SK-N-SH (cell line): ENCODE measurements at regions of chr19 and their contacts with region 1.

Region 1: DNA sequence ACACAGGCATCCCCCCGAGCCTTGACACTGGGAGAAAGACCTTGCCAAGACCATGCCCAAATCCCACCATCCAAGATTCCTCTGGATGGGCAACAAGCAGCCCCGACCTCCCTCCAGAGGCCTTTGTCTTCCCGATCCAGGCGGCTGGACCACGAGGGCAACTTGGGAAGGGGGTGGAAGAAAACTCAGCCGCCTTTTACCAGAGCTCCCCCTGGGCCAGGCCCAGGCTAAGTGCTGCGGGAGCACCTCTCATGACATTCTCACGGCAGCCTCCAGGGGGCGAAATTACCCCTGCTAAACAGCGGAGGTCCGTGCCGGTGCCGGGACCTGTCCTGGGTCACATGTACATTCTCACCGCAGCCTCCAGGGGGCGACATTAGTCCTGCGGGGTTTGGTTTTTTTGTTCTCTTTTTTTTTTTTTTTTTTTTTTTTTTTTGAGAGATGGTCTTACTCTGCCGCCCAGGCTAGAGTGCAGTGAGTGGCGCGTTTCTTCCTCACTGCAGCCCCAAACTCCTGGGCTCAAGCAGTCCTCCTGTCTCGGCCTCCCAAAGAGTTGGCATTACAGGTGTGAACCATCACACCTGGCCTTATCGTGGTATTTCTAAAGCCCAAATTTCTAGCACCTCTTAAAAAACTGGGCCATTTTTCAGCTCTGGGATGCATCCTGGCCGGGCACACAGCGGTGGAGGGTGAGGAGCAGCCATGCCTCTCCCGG is 2.1 kb upstream of the RSPH6A start:
- DNase-seq: peak; percentile 99
- H3K4me3 ChIP-seq: peak overlapping the region in 1 of 2 experiments; percentile 58; a peak in 1 of 4 replicates
- H3K27ac ChIP-seq: no peak overlapping the region; a peak in 1 of 4 replicates
- H3K4me1 ChIP-seq: peaks cover 0 to 9% of the 10 kb centered on the region in 2 experiments; a peak in 1 of 4 replicates
- H3K27me3 ChIP-seq: no peaks in the 10 kb centered on the region
- CTCF ChIP-seq: peak; percentile 99
- EP300 ChIP-seq: no peak
- RAD21 ChIP-seq: peak; percentile 82

Region 2: GRCh38 chr19:45770192-45771101 is 46.7 kb before region 1 on chr19:
- CTCF ChIA-PET with region 1: interaction called, 19 read pairs
- POLR2A ChIA-PET with region 1: interaction called, 4 read pairs
- DNase-seq: peak; percentile 96
- H3K4me3 ChIP-seq: peak overlapping the region; percentile 55 to 61
- H3K27ac ChIP-seq: peak overlapping the region; percentile 79 to 95
- H3K4me1 ChIP-seq: peaks cover 8 to 30% of the 10 kb centered on the region in 2 experiments; a peak in 3 of 4 replicates
- H3K27me3 ChIP-seq: no peaks in the 10 kb centered on the region
- CTCF ChIP-seq: peak; percentile 89
- EP300 ChIP-seq: no peak; a peak in 1 of 4 replicates
- RAD21 ChIP-seq: peak; percentile 73

Region 3: GRCh38 chr19:45798995-45799517 is 18.1 kb before region 1 on chr19:
- CTCF ChIA-PET with region 1: interaction called, 61 read pairs
- POLR2A ChIA-PET with region 1: interaction called, 6 read pairs
- DNase-seq: peak; percentile 91
- H3K4me3 ChIP-seq: no peak overlapping the region
- H3K27ac ChIP-seq: peak overlapping the region in 1 of 2 experiments; percentile 25; a peak in 1 of 4 replicates
- H3K4me1 ChIP-seq: peaks cover 2 to 3% of the 10 kb centered on the region in 2 experiments; a peak in 2 of 4 replicates
- H3K27me3 ChIP-seq: no peaks in the 10 kb centered on the region
- CTCF ChIP-seq: peak; percentile 87
- EP300 ChIP-seq: no peak
- RAD21 ChIP-seq: peak; percentile 71

Region 4: GRCh38 chr19:45842198-45842597 is 25.0 kb after region 1 on chr19:
- CTCF ChIA-PET with region 1: interaction called, 35 read pairs
- POLR2A ChIA-PET with region 1: no interaction called
- DNase-seq: no peak
- H3K4me3 ChIP-seq: no peak overlapping the region
- H3K27ac ChIP-seq: no peak overlapping the region
- H3K4me1 ChIP-seq: no peaks in the 10 kb centered on the region
- H3K27me3 ChIP-seq: no peaks in the 10 kb centered on the region
- CTCF ChIP-seq: no peak
- EP300 ChIP-seq: no peak
- RAD21 ChIP-seq: no peak

Region 5: DNA sequence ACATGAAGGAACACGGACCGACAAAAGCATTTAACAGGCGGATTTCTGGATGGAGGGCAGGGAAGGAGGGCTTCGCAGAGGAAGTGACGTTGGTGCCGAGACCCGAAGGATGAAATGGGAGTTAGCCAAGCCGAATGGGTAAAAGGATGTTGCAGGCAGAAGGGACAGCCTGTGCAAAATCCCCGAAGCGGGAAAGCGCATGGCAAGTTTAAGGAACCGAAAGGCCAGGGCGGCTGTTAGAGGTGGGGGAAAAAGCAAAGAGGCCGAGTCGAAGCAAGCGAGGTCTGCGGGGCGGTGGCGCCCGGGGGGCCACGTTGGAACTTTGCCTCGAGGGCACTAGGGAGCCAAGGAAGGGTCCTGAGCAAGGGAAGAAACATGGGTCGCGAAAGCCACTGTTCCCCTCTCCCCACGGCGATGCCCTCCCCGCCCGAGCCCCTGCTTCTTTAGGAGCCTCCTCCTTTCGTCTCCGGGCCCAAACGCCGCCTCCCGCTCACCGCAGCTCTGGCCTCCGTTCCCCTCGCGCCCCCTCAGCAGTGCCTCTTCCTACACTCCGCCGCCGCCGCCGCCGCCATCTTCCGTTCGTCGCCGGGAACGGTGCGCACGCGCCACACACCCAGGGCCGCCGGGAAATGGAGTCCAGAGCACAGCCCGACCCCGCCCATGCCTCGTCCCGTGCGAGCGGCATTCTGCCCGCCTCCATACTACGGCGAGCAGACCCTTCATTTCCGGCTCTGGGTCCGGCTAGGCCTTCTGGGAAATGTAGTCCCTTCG is 45.6 kb after region 1 on chr19 and contains the start of gene SYMPK:
- CTCF ChIA-PET with region 1: interaction called, 20 read pairs
- POLR2A ChIA-PET with region 1: interaction called, 4 read pairs
- DNase-seq: peak; percentile 99
- H3K4me3 ChIP-seq: peak within 1 kb of the TSS; percentile 77 to 96
- H3K27ac ChIP-seq: peak within 1 kb of the TSS; percentile 89 to 93
- H3K4me1 ChIP-seq: peaks cover 0 to 6% of the 10 kb centered on the region in 2 experiments; a peak in 2 of 4 replicates
- H3K27me3 ChIP-seq: peaks cover 19% of the 10 kb centered on the region; the same call in 1 of the 2 replicates
- CTCF ChIP-seq: no peak
- EP300 ChIP-seq: no peak
- RAD21 ChIP-seq: no peak
- polyA plus RNA-seq, gene SYMPK: 76.3 and 92.7 TPM in 2 replicates

Region 6: DNA sequence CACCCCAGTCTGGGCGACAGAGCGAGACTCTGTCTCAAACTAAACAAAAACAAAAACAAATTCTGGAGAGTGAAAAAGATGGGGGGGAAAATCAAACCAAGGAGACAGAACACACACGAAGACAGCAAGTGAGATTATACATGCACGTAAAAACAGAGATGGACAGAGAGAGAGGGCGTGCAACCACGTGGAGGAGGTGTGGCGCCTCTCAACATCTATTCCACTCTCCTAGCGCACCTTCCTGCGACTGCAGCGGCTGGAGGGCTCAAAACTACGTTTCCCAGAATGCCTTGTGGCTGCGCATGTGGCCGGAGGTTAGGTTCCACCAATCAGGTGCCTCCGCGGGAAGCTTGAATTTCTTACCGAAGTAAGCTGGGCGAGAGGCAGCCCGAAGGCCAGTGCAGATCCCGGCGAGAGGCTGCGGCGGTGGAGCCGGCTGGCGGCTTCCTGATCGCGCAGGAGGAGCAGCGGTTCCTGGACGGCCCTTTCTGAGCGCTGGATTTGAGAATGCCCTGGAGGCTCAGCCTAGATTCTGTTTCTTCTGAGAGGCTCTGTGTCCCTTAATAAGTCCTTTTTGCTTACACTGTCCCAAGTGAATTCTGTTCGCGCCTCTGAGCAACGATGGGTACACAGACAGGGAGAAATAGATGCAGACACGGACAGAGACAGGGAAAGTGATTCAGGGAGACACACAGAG is 110.5 kb after region 1 on chr19:
- CTCF ChIA-PET with region 1: no interaction called
- POLR2A ChIA-PET with region 1: no interaction called
- DNase-seq: peak; percentile 97
- H3K4me3 ChIP-seq: peak overlapping the region in 1 of 2 experiments; percentile 33; a peak in 3 of 4 replicates
- H3K27ac ChIP-seq: no peak overlapping the region
- H3K4me1 ChIP-seq: peaks cover 0 to 5% of the 10 kb centered on the region in 2 experiments; a peak in 1 of 4 replicates
- H3K27me3 ChIP-seq: no peaks in the 10 kb centered on the region
- CTCF ChIP-seq: no peak; the same call in 1 of the 2 replicates
- EP300 ChIP-seq: no peak
- RAD21 ChIP-seq: peak; percentile 35; the same call in 1 of the 2 replicates